GM12878 (cell line): ENCODE measurements at regions of chr2 and their contacts with region 1.

Region 1: GRCh38 chr2:48946449-48947048 is 191.0 kb upstream of the LHCGR start:
- DNase-seq: peak; percentile 20
- ATAC-seq: peak; percentile 98
- H3K4me3 ChIP-seq: no peak overlapping the region
- H3K27ac ChIP-seq: no peak overlapping the region
- H3K4me1 ChIP-seq: no peaks in the 10 kb centered on the region
- H3K27me3 ChIP-seq: no peaks in the 10 kb centered on the region; a peak in 1 of 4 replicates
- CTCF ChIP-seq: peak; percentile 83 to 90 (median 85); a peak in 5 of 6 replicates
- EP300 ChIP-seq: no peak
- POLR2A ChIP-seq: no peak
- RAD21 ChIP-seq: peak; percentile 97

Region 2: DNA sequence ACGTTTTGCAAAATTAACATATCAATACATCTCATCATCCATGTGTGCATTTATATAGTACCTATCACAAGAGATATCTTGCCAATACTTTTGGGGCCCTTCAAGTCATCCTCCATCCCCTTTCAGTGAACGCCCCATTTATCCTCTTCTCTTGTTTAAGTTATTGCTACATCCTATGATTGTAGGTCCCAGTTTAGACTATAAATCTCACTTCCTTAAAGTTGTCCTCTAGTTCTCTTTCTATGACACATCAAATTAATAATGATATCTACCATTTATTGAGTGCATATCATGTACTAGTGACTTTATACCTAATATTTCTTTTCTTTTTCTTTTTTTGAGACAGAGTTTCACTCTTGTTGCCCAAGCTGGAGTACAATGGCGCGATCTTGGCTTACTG is 1011.5 kb before region 1 on chr2:
- CTCF ChIA-PET with region 1: no interaction called
- POLR2A ChIA-PET with region 1: no interaction called
- RAD21 ChIA-PET with region 1: no interaction called
- SMC1A ChIA-PET with region 1: no interaction called
- in situ Hi-C with region 1: no loop called
- intact Hi-C with region 1: no loop called
- DNase-seq: no peak
- ATAC-seq: no peak
- H3K4me3 ChIP-seq: no peak overlapping the region
- H3K27ac ChIP-seq: no peak overlapping the region
- H3K4me1 ChIP-seq: no peaks in the 10 kb centered on the region
- H3K27me3 ChIP-seq: peaks cover 0 to 3% of the 10 kb centered on the region in 2 experiments; a peak in 1 of 4 replicates
- CTCF ChIP-seq: no peak
- EP300 ChIP-seq: no peak
- POLR2A ChIP-seq: no peak
- RAD21 ChIP-seq: no peak

Region 3: DNA sequence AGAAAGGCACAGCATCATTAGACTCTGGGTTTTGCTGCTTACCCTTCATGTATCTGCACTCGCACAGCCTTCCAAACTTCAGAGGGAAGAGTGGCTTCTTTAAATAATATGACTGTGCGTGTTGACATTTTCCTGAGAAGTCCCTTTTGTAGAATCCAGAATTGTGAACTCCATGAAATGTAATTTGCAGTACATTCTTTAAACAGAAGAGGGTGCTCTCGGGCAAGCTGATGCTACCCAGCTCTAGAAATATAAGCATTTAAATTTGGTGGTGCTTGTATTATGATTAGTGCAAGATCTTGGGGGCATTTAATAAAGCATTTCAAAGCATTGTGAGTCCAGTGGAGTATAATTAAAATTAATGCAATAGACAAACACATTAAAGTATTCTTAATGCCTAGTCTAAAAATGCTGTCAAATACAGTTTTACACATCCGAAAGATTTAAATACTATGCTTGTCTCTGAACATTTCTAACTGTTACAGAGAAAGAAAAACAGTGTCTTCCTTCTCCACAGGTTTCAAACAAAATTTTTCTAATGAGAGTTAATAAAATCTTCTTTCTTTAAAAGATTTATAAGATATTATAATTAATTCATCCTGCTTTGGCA is 346.2 kb before region 1 on chr2:
- CTCF ChIA-PET with region 1: interaction called, 3 read pairs
- POLR2A ChIA-PET with region 1: no interaction called
- RAD21 ChIA-PET with region 1: no interaction called
- SMC1A ChIA-PET with region 1: no interaction called
- in situ Hi-C with region 1: no loop called
- intact Hi-C with region 1: loop called (anchors 2 kb)
- DNase-seq: no peak
- ATAC-seq: peak; percentile 77
- H3K4me3 ChIP-seq: no peak overlapping the region
- H3K27ac ChIP-seq: no peak overlapping the region
- H3K4me1 ChIP-seq: no peaks in the 10 kb centered on the region
- H3K27me3 ChIP-seq: peaks cover 0 to 2% of the 10 kb centered on the region in 2 experiments; a peak in 1 of 4 replicates
- CTCF ChIP-seq: peak; percentile 61 to 70 (median 68)
- EP300 ChIP-seq: no peak
- POLR2A ChIP-seq: no peak
- RAD21 ChIP-seq: peak; percentile 81

Region 4: GRCh38 chr2:48961009-48961408 is 14.5 kb after region 1 on chr2:
- CTCF ChIA-PET with region 1: interaction called, 14 read pairs
- POLR2A ChIA-PET with region 1: no interaction called
- RAD21 ChIA-PET with region 1: no interaction called
- SMC1A ChIA-PET with region 1: interaction called, 5 read pairs
- in situ Hi-C with region 1: no loop called
- intact Hi-C with region 1: no loop called
- DNase-seq: no peak
- ATAC-seq: no peak
- H3K4me3 ChIP-seq: no peak overlapping the region
- H3K27ac ChIP-seq: no peak overlapping the region
- H3K4me1 ChIP-seq: no peaks in the 10 kb centered on the region
- H3K27me3 ChIP-seq: no peaks in the 10 kb centered on the region
- CTCF ChIP-seq: no peak
- EP300 ChIP-seq: no peak
- POLR2A ChIP-seq: no peak
- RAD21 ChIP-seq: no peak

Region 5: GRCh38 chr2:49332415-49332814 is 385.9 kb after region 1 on chr2:
- CTCF ChIA-PET with region 1: no interaction called
- POLR2A ChIA-PET with region 1: no interaction called
- RAD21 ChIA-PET with region 1: no interaction called
- SMC1A ChIA-PET with region 1: no interaction called
- in situ Hi-C with region 1: no loop called
- intact Hi-C with region 1: loop called (anchors 5 kb)
- DNase-seq: no peak
- ATAC-seq: no peak
- H3K4me3 ChIP-seq: no peak overlapping the region
- H3K27ac ChIP-seq: no peak overlapping the region
- H3K4me1 ChIP-seq: no peaks in the 10 kb centered on the region
- H3K27me3 ChIP-seq: no peaks in the 10 kb centered on the region
- CTCF ChIP-seq: no peak
- EP300 ChIP-seq: no peak
- POLR2A ChIP-seq: no peak
- RAD21 ChIP-seq: no peak

Region 6: GRCh38 chr2:49616800-49617199 is 670.3 kb after region 1 on chr2:
- CTCF ChIA-PET with region 1: no interaction called
- POLR2A ChIA-PET with region 1: no interaction called
- RAD21 ChIA-PET with region 1: interaction called, 3 read pairs
- SMC1A ChIA-PET with region 1: no interaction called
- in situ Hi-C with region 1: no loop called
- intact Hi-C with region 1: loop called (anchors 10 kb)
- DNase-seq: no peak
- ATAC-seq: peak; percentile 65
- H3K4me3 ChIP-seq: no peak overlapping the region
- H3K27ac ChIP-seq: no peak overlapping the region
- H3K4me1 ChIP-seq: no peaks in the 10 kb centered on the region
- H3K27me3 ChIP-seq: no peaks in the 10 kb centered on the region
- CTCF ChIP-seq: peak; percentile 31 to 43 (median 37); a peak in 4 of 6 replicates
- EP300 ChIP-seq: no peak
- POLR2A ChIP-seq: no peak
- RAD21 ChIP-seq: peak; percentile 50

Region 7: DNA sequence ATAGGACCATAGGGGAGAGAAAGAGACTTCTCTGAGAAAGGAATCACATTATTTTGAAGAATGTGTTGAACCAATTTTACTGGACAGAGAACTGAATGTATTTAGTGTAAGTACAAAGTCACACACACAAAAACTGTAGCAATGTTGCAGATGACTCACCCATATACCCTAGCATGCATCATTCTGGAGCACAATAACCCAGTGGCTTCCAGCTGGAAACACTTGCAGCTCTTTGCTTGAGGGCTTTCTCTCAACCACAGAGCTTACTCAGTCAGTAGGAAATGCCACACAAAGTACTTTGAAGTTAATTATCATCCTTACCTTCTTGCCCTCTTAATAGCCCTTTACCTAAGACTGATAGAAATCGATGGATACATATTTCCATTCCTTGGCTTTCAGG is 967.7 kb after region 1 on chr2:
- CTCF ChIA-PET with region 1: no interaction called
- POLR2A ChIA-PET with region 1: no interaction called
- RAD21 ChIA-PET with region 1: no interaction called
- SMC1A ChIA-PET with region 1: no interaction called
- in situ Hi-C with region 1: no loop called
- intact Hi-C with region 1: no loop called
- DNase-seq: no peak
- ATAC-seq: no peak
- H3K4me3 ChIP-seq: no peak overlapping the region
- H3K27ac ChIP-seq: no peak overlapping the region
- H3K4me1 ChIP-seq: no peaks in the 10 kb centered on the region
- H3K27me3 ChIP-seq: no peaks in the 10 kb centered on the region
- CTCF ChIP-seq: no peak
- EP300 ChIP-seq: no peak
- POLR2A ChIP-seq: no peak
- RAD21 ChIP-seq: no peak

Region 8: GRCh38 chr2:50143822-50144575 is 1197.5 kb after region 1 on chr2:
- CTCF ChIA-PET with region 1: interaction called, 20 read pairs
- POLR2A ChIA-PET with region 1: no interaction called
- RAD21 ChIA-PET with region 1: interaction called, 9 read pairs
- SMC1A ChIA-PET with region 1: interaction called, 13 read pairs
- in situ Hi-C with region 1: loop called (anchors 10 kb)
- intact Hi-C with region 1: loop called (anchors 1 kb)
- DNase-seq: peak; percentile 24
- ATAC-seq: peak; percentile 99
- H3K4me3 ChIP-seq: peak overlapping the region; percentile 69
- H3K27ac ChIP-seq: peak overlapping the region; percentile 33; the same call in 1 of the 2 replicates
- H3K4me1 ChIP-seq: no peaks in the 10 kb centered on the region
- H3K27me3 ChIP-seq: no peaks in the 10 kb centered on the region
- CTCF ChIP-seq: peak; percentile 54 to 68 (median 55); a peak in 5 of 6 replicates
- EP300 ChIP-seq: no peak
- POLR2A ChIP-seq: no peak
- RAD21 ChIP-seq: peak; percentile 69

Region 9: GRCh38 chr2:50492477-50492851 is 1545.9 kb after region 1 on chr2:
- CTCF ChIA-PET with region 1: interaction called, 5 read pairs
- POLR2A ChIA-PET with region 1: no interaction called
- RAD21 ChIA-PET with region 1: no interaction called
- SMC1A ChIA-PET with region 1: no interaction called
- in situ Hi-C with region 1: no loop called
- intact Hi-C with region 1: loop called (anchors 10 kb)
- DNase-seq: peak; percentile 5
- ATAC-seq: peak; percentile 94
- H3K4me3 ChIP-seq: no peak overlapping the region
- H3K27ac ChIP-seq: no peak overlapping the region
- H3K4me1 ChIP-seq: no peaks in the 10 kb centered on the region
- H3K27me3 ChIP-seq: no peaks in the 10 kb centered on the region
- CTCF ChIP-seq: peak; percentile 61 to 69 (median 64)
- EP300 ChIP-seq: no peak
- POLR2A ChIP-seq: no peak
- RAD21 ChIP-seq: peak; percentile 75